ENCODE measurements at regions of chr19 and their contacts with region 1.

Region 1: GRCh38 chr19:38619361-38620174 is 580 bp downstream of the EIF3K start:
- DNase-seq: no peak
- H3K4me3 ChIP-seq: peak overlapping the region; percentile 15 to 87 (median 51)
- H3K27ac ChIP-seq: peak overlapping the region in 4 of 5 donors; percentile 34 to 89 (median 72)
- H3K4me1 ChIP-seq: peaks cover 6 to 19% of the 10 kb centered on the region in 2 donors
- H3K27me3 ChIP-seq: no peaks in the 10 kb centered on the region
- CTCF ChIP-seq: no peak
- POLR2A ChIP-seq: no peak

Region 2: DNA sequence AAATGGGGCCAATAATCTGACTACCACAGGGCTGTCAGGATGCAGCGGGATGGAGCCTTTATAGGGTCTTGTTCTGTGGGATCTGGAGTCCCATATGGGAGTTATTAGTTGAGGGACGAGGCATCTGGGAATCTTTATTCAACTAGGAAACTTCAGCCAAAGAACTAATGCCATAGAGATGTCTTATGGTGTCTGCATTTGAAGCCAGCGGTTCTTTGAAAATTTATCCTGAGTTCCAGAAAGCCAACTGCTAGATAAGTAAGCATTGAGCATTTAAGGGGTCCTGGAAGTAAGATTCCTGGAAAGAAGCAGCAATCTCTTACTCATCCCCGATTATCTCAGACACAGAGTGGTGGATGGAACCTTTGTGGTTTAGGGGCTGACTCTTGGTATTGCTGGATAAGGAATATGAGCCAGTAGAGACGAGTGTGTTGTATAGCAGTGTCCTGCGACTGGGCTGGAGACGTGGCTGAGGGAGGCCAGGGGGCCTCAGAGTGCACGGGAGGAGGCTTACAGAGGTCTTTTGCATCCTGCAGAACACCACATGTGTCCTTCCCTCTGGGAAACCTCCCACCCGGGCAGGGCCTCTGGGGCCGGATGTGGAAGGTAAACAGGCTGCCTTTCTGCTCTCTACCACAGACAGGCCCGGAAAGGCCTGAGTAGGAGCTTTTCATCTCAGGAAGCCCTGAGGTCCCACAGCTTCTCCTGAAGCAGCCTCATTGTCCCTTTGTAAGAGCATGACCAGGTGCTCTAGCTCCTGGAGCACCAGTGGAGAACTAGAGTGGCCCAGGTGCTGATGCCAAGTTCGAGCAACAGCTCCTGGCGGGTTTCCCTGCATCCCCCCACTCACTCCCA is 56.7 kb after region 1 on chr19:
- intact Hi-C with region 1: no loop called
- DNase-seq: no peak
- H3K4me3 ChIP-seq: no peak overlapping the region
- H3K27ac ChIP-seq: peak overlapping the region in 4 of 5 donors; percentile 80 to 91 (median 86)
- H3K4me1 ChIP-seq: peaks cover 26 to 67% of the 10 kb centered on the region in 2 donors
- H3K27me3 ChIP-seq: no peaks in the 10 kb centered on the region
- CTCF ChIP-seq: no peak
- POLR2A ChIP-seq: no peak

Region 3: DNA sequence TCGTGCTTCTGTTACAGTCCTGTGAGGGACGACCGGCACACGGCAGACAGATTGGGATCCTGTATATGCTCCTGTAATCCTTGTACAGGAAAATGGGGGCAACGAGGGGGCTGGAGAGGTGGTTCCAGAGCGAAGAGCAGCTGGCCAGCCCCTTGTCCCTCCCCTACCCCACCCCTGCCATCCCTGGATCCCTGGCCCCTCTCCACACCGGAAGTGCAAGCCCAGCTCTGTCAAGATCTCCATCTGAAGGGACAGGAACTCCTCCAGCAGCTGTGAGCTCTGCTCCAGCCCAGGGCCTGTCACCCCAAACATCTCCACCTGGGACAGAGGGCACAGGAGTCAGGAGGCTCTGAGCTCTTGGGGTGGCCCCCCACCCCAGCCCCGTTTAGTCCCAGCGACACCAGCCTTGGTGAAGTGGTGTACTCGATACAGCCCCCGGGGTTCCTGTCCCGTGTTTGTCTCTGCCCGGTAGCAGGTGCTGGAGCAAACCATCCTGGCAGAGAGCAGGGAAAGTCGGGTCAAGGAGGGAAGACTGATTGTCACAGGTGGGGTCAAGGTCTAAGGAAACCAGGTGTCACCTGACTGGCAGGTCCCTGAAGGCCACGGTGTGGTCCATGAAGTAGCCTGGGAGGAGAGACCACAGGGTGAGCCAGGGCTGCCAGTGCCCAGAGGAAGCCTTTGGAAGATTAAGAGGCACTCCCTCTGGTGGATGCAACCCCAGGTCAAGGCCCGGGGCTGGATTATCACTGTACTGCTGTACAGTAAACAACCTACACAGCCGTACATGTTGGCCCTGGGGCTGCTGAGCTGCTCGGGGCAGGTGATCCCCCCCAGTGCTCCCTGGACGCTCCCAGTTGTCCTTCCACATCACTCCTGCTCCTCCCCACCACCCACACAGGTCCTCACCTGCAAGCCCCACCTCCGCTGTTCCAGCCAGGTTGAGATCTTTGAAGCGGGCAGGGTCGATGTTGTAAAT is 298.2 kb after region 1 on chr19:
- intact Hi-C with region 1: loop called in 1 of 2 experiments (anchors 10 kb)
- DNase-seq: peak in 6 of 7 donors; percentile 41 to 66 (median 54)
- H3K4me3 ChIP-seq: no peak overlapping the region
- H3K27ac ChIP-seq: no peak overlapping the region
- H3K4me1 ChIP-seq: peaks cover 0 to 3% of the 10 kb centered on the region in 2 donors
- H3K27me3 ChIP-seq: no peaks in the 10 kb centered on the region
- CTCF ChIP-seq: peak in 4 of 6 experiments; percentile 9 to 25 (median 18)
- POLR2A ChIP-seq: no peak